HepG2 (cell line): ENCODE measurements at regions of chr5 and their contacts with region 1.

Region 1: GRCh38 chr5:72138943-72139521 is 31.8 kb downstream of the MAP1B start:
- DNase-seq: no peak
- ATAC-seq: no peak
- H3K4me3 ChIP-seq: no peak overlapping the region
- H3K27ac ChIP-seq: no peak overlapping the region
- H3K4me1 ChIP-seq: no peaks in the 10 kb centered on the region
- H3K27me3 ChIP-seq: no peaks in the 10 kb centered on the region
- CTCF ChIP-seq: no peak
- EP300 ChIP-seq: no peak
- POLR2A ChIP-seq: no peak
- RAD21 ChIP-seq: no peak

Region 2: GRCh38 chr5:72268753-72269410 is 129.8 kb after region 1 on chr5:
- CTCF ChIA-PET with region 1: interaction called, 10 read pairs
- POLR2A ChIA-PET with region 1: no interaction called
- in situ Hi-C with region 1: no loop called
- intact Hi-C with region 1: loop called (anchors 5 kb)
- DNase-seq: peak; percentile 48
- ATAC-seq: peak; percentile 75
- H3K4me3 ChIP-seq: no peak overlapping the region
- H3K27ac ChIP-seq: no peak overlapping the region
- H3K4me1 ChIP-seq: peaks cover 16% of the 10 kb centered on the region
- H3K27me3 ChIP-seq: no peaks in the 10 kb centered on the region
- CTCF ChIP-seq: peak; percentile 61
- EP300 ChIP-seq: no peak
- POLR2A ChIP-seq: no peak
- RAD21 ChIP-seq: no peak